Naive thymus-derived CD4-positive, alpha-beta T cell (primary cell): ENCODE measurements at regions of chr11 and their contacts with region 1.

Region 1: GRCh38 chr11:68271781-68272608 is at the start of gene C11orf24:
- DNase-seq: peak; percentile 87 to 98 (median 90)
- ATAC-seq: peak; percentile 94
- H3K4me3 ChIP-seq: peak within 1 kb of the TSS; percentile 77
- H3K4me3 Mint-ChIP-seq: peak within 1 kb of the TSS; percentile 88 to 99 (median 94)
- H3K27ac ChIP-seq: peak within 1 kb of the TSS; percentile 94
- H3K27ac Mint-ChIP-seq: peak within 1 kb of the TSS; percentile 94 to 99 (median 96)
- H3K4me1 ChIP-seq: peaks cover 11 to 12% of the 10 kb centered on the region in 2 donors
- H3K4me1 Mint-ChIP-seq: peaks cover 23 to 50% (median 44%) of the 10 kb centered on the region in 7 donors
- H3K27me3 ChIP-seq: no peaks in the 10 kb centered on the region
- H3K27me3 Mint-ChIP-seq: no peaks in the 10 kb centered on the region
- total RNA-seq, gene C11orf24: 9.5 to 20.0 (median 15.4) TPM

Region 2: DNA sequence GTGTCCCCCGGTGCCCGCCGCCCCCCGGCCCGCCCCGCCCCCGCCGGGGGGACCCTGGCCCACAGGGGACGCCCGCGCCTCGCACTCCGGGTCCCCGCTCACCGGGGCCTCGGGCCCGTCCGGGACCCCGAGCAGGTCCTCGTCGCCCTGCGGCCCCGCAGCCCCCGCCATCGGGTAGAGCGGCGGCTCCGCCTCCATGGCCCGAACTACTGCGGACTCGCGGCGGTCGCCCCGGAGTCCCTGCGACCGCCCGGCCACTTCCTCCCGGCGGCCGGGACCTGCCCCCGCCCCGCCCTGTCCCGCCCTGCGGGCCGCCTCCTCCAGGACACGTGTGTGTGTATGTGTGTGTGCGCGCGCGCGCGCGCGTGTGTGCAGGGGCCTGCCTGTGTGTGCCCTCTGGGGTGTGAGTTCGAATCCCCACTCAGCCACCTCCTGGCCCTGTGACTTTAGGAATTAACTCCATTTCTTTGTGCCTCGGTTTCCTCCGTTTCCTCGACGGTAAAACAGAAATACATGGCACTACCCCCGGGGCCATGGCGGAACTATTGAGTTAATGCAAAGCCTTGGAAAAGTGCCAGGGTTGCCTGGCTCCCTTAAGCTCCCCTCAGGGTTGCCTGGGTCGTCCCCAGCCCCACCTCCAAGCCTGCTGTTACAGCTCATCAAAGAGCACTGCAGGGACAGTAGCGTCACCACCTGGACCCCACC is 268.0 kb before region 1 on chr11 and contains the start of gene UNC93B1:
- CTCF ChIA-PET with region 1: no interaction called
- POLR2A ChIA-PET with region 1: no interaction called
- intact Hi-C with region 1: loop called in 1 of 2 experiments (anchors 10 kb)
- DNase-seq: peak; percentile 54 to 85 (median 69)
- ATAC-seq: peak; percentile 93
- H3K4me3 ChIP-seq: peak within 1 kb of the TSS; percentile 64
- H3K4me3 Mint-ChIP-seq: peak within 1 kb of the TSS; percentile 82 to 93 (median 86)
- H3K27ac ChIP-seq: peak within 1 kb of the TSS; percentile 66
- H3K27ac Mint-ChIP-seq: peak within 1 kb of the TSS; percentile 74 to 92 (median 85)
- H3K4me1 ChIP-seq: peaks cover 6 to 8% of the 10 kb centered on the region in 2 donors
- H3K4me1 Mint-ChIP-seq: peaks cover 0 to 24% (median 20%) of the 10 kb centered on the region in 7 donors
- H3K27me3 ChIP-seq: no peaks in the 10 kb centered on the region
- H3K27me3 Mint-ChIP-seq: no peaks in the 10 kb centered on the region
- total RNA-seq, gene UNC93B1: 10.1 to 76.3 (median 21.1) TPM

Region 3: GRCh38 chr11:68121067-68121899 is 150.7 kb before region 1 on chr11 and contains the start of gene CHKA:
- CTCF ChIA-PET with region 1: no interaction called
- POLR2A ChIA-PET with region 1: no interaction called
- intact Hi-C with region 1: loop called in 1 of 2 experiments (anchors 5 kb)
- DNase-seq: peak; percentile 69 to 95 (median 80)
- ATAC-seq: peak; percentile 91
- H3K4me3 ChIP-seq: peak within 1 kb of the TSS; percentile 79
- H3K4me3 Mint-ChIP-seq: peak within 1 kb of the TSS; percentile 72 to 90 (median 87)
- H3K27ac ChIP-seq: peak within 1 kb of the TSS; percentile 68
- H3K27ac Mint-ChIP-seq: peak within 1 kb of the TSS; percentile 28 to 92 (median 84)
- H3K4me1 ChIP-seq: peaks cover 0 to 11% of the 10 kb centered on the region in 2 donors
- H3K4me1 Mint-ChIP-seq: peaks cover 5 to 19% (median 13%) of the 10 kb centered on the region in 7 donors
- H3K27me3 ChIP-seq: no peaks in the 10 kb centered on the region
- H3K27me3 Mint-ChIP-seq: peaks cover 0 to 21% (median 0%) of the 10 kb centered on the region in 5 donors
- total RNA-seq, gene CHKA: 6.0 to 31.3 (median 7.3) TPM

Region 4: GRCh38 chr11:68257475-68258362 is 14.3 kb before region 1 on chr11:
- CTCF ChIA-PET with region 1: interaction called, 8 read pairs
- POLR2A ChIA-PET with region 1: interaction called, 7 read pairs
- intact Hi-C with region 1: loop called (anchors 1 kb)
- DNase-seq: peak; percentile 84 to 95 (median 89)
- ATAC-seq: peak; percentile 95
- H3K4me3 ChIP-seq: no peak overlapping the region
- H3K4me3 Mint-ChIP-seq: peak overlapping the region in 1 of 10 donors; percentile 34
- H3K27ac ChIP-seq: no peak overlapping the region
- H3K27ac Mint-ChIP-seq: peak overlapping the region in 3 of 9 donors; percentile 21 to 85 (median 54)
- H3K4me1 ChIP-seq: peaks cover 3 to 5% of the 10 kb centered on the region in 2 donors
- H3K4me1 Mint-ChIP-seq: peaks cover 2 to 6% (median 4%) of the 10 kb centered on the region in 7 donors
- H3K27me3 ChIP-seq: no peaks in the 10 kb centered on the region
- H3K27me3 Mint-ChIP-seq: peaks cover 0 to 2% (median 0%) of the 10 kb centered on the region in 5 donors

Region 5: GRCh38 chr11:68297812-68298658 is 26.0 kb after region 1 on chr11:
- CTCF ChIA-PET with region 1: interaction called, 19 read pairs
- POLR2A ChIA-PET with region 1: interaction called, 5 read pairs
- intact Hi-C with region 1: loop called (anchors 1 kb)
- DNase-seq: peak; percentile 42 to 84 (median 70)
- ATAC-seq: peak; percentile 98
- H3K4me3 ChIP-seq: no peak overlapping the region
- H3K4me3 Mint-ChIP-seq: no peak overlapping the region
- H3K27ac ChIP-seq: no peak overlapping the region
- H3K27ac Mint-ChIP-seq: no peak overlapping the region
- H3K4me1 ChIP-seq: no peaks in the 10 kb centered on the region
- H3K4me1 Mint-ChIP-seq: peaks cover 0 to 7% (median 0%) of the 10 kb centered on the region in 7 donors
- H3K27me3 ChIP-seq: no peaks in the 10 kb centered on the region
- H3K27me3 Mint-ChIP-seq: peaks cover 0 to 5% (median 0%) of the 10 kb centered on the region in 5 donors

Region 6: GRCh38 chr11:68328374-68329091 is 56.5 kb after region 1 on chr11:
- CTCF ChIA-PET with region 1: no interaction called
- POLR2A ChIA-PET with region 1: no interaction called
- intact Hi-C with region 1: loop called in 1 of 2 experiments (anchors 1 kb)
- DNase-seq: peak in 3 of 9 donors; percentile 26 to 38 (median 31)
- ATAC-seq: peak; percentile 47
- H3K4me3 ChIP-seq: no peak overlapping the region
- H3K4me3 Mint-ChIP-seq: peak overlapping the region; percentile 39 to 81 (median 70)
- H3K27ac ChIP-seq: no peak overlapping the region
- H3K27ac Mint-ChIP-seq: peak overlapping the region in 1 of 9 donors; percentile 31
- H3K4me1 ChIP-seq: peaks cover 15 to 68% of the 10 kb centered on the region in 2 donors
- H3K4me1 Mint-ChIP-seq: peaks cover 33 to 68% (median 63%) of the 10 kb centered on the region in 7 donors
- H3K27me3 ChIP-seq: no peaks in the 10 kb centered on the region
- H3K27me3 Mint-ChIP-seq: no peaks in the 10 kb centered on the region

Region 7: GRCh38 chr11:68542617-68543016 is 270.6 kb after region 1 on chr11:
- CTCF ChIA-PET with region 1: no interaction called
- POLR2A ChIA-PET with region 1: no interaction called
- intact Hi-C with region 1: no loop called
- DNase-seq: no peak
- ATAC-seq: no peak
- H3K4me3 ChIP-seq: no peak overlapping the region
- H3K4me3 Mint-ChIP-seq: no peak overlapping the region
- H3K27ac ChIP-seq: no peak overlapping the region
- H3K27ac Mint-ChIP-seq: peak overlapping the region in 7 of 9 donors; percentile 27 to 53 (median 38)
- H3K4me1 ChIP-seq: no peaks in the 10 kb centered on the region
- H3K4me1 Mint-ChIP-seq: peaks cover 45 to 89% (median 82%) of the 10 kb centered on the region in 7 donors
- H3K27me3 ChIP-seq: no peaks in the 10 kb centered on the region
- H3K27me3 Mint-ChIP-seq: no peaks in the 10 kb centered on the region

Region 8: DNA sequence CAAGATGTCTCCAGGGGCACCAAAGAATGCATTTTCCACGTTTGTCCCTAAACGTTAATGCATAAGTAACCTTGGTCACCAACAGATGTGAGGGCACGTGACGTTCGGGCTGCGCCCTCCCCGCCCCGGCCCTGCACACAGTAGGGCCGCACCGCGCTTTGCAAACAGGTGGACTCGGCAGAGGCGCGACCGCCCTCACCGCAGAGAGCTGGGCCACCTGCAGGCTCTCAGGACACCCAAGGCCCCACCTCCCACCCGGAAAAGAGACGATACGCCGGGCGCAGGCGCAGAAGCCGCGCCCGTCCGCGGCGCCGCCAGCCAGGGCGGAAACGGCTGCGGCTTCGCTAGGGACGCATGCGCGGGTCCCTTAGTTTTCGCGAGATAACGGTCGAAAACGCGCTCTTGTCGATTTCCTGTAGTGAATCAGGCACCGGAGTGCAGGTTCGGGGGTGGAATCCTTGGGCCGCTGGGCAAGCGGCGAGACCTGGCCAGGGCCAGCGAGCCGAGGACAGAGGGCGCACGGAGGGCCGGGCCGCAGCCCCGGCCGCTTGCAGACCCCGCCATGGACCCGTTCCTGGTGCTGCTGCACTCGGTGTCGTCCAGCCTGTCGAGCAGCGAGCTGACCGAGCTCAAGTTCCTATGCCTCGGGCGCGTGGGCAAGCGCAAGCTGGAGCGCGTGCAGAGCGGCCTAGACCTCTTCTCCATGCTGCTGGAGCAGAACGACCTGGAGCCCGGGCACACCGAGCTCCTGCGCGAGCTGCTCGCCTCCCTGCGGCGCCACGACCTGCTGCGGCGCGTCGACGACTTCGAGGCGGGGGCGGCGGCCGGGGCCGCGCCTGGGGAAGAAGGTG is 1931.1 kb after region 1 on chr11 and contains the start of gene FADD:
- CTCF ChIA-PET with region 1: no interaction called
- POLR2A ChIA-PET with region 1: no interaction called
- intact Hi-C with region 1: loop called in 1 of 2 experiments (anchors 5 kb)
- DNase-seq: peak; percentile 86 to 93 (median 90)
- ATAC-seq: peak; percentile 77
- H3K4me3 ChIP-seq: peak within 1 kb of the TSS; percentile 97
- H3K4me3 Mint-ChIP-seq: peak within 1 kb of the TSS; percentile 92 to 99 (median 96)
- H3K27ac ChIP-seq: peak within 1 kb of the TSS; percentile 81
- H3K27ac Mint-ChIP-seq: peak within 1 kb of the TSS; percentile 93 to 99 (median 97)
- H3K4me1 ChIP-seq: peaks cover 21 to 34% of the 10 kb centered on the region in 2 donors
- H3K4me1 Mint-ChIP-seq: peaks cover 28 to 54% (median 36%) of the 10 kb centered on the region in 7 donors
- H3K27me3 ChIP-seq: no peaks in the 10 kb centered on the region
- H3K27me3 Mint-ChIP-seq: peaks cover 0 to 6% (median 0%) of the 10 kb centered on the region in 5 donors
- total RNA-seq, gene FADD: 9.6 to 40.9 (median 38.4) TPM